GM12878 (cell line): ENCODE measurements at regions of chr9 and their contacts with region 1.

Region 1: GRCh38 chr9:89597711-89598625 is 6.8 kb upstream of the GADD45G start:
- DNase-seq: no peak
- ATAC-seq: peak; percentile 72
- H3K4me3 ChIP-seq: no peak overlapping the region
- H3K27ac ChIP-seq: no peak overlapping the region
- H3K4me1 ChIP-seq: no peaks in the 10 kb centered on the region
- H3K27me3 ChIP-seq: peaks cover 5 to 6% of the 10 kb centered on the region in 2 experiments
- CTCF ChIP-seq: peak; percentile 73 to 91 (median 90)
- EP300 ChIP-seq: no peak
- POLR2A ChIP-seq: no peak
- RAD21 ChIP-seq: peak; percentile 96

Region 2: GRCh38 chr9:89477811-89478630 is 119.9 kb before region 1 on chr9:
- CTCF ChIA-PET with region 1: no interaction called
- POLR2A ChIA-PET with region 1: no interaction called
- RAD21 ChIA-PET with region 1: no interaction called
- SMC1A ChIA-PET with region 1: no interaction called
- in situ Hi-C with region 1: no loop called
- intact Hi-C with region 1: no loop called
- DNase-seq: no peak
- ATAC-seq: peak; percentile 38
- H3K4me3 ChIP-seq: no peak overlapping the region
- H3K27ac ChIP-seq: peak overlapping the region; percentile 59
- H3K4me1 ChIP-seq: peaks cover 31% of the 10 kb centered on the region
- H3K27me3 ChIP-seq: no peaks in the 10 kb centered on the region
- CTCF ChIP-seq: no peak
- EP300 ChIP-seq: no peak
- POLR2A ChIP-seq: no peak
- RAD21 ChIP-seq: no peak

Region 3: DNA sequence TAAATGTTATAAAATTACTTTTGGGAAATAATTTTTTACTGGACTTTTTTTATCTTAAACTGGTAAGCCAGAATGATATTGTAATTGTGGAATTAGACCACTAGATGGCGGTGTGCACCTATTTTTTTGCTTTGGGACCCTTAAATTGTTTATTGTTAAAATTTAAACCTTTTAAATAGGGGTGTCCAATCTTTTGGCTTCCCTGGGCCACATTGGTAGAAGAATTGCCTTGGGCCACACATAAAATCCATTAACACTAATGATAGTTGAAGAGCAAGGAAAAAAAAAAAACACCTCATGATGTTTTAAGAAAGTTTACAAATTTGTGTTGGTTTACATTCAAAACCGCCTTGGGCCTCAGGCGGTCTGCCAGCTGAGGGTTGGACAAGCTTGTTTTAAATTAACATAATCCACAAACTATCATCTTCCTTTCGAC is 21.5 kb before region 1 on chr9:
- CTCF ChIA-PET with region 1: interaction called, 21 read pairs
- POLR2A ChIA-PET with region 1: no interaction called
- RAD21 ChIA-PET with region 1: interaction called, 9 read pairs
- SMC1A ChIA-PET with region 1: interaction called, 24 read pairs
- in situ Hi-C with region 1: no loop called
- intact Hi-C with region 1: no loop called
- DNase-seq: no peak
- ATAC-seq: no peak
- H3K4me3 ChIP-seq: no peak overlapping the region
- H3K27ac ChIP-seq: no peak overlapping the region
- H3K4me1 ChIP-seq: no peaks in the 10 kb centered on the region
- H3K27me3 ChIP-seq: no peaks in the 10 kb centered on the region; a peak in 2 of 4 replicates
- CTCF ChIP-seq: peak; percentile 34 to 58 (median 49); a peak in 5 of 6 replicates
- EP300 ChIP-seq: no peak
- POLR2A ChIP-seq: no peak
- RAD21 ChIP-seq: peak; percentile 63

Region 4: GRCh38 chr9:90095682-90096081 is 497.7 kb after region 1 on chr9:
- CTCF ChIA-PET with region 1: interaction called, 282 read pairs
- POLR2A ChIA-PET with region 1: interaction called, 4 read pairs
- RAD21 ChIA-PET with region 1: interaction called, 125 read pairs
- SMC1A ChIA-PET with region 1: interaction called, 89 read pairs
- in situ Hi-C with region 1: loop called (anchors 5 kb)
- intact Hi-C with region 1: no loop called
- DNase-seq: no peak
- ATAC-seq: no peak
- H3K4me3 ChIP-seq: no peak overlapping the region
- H3K27ac ChIP-seq: no peak overlapping the region
- H3K4me1 ChIP-seq: peaks cover 3% of the 10 kb centered on the region; the same call in 1 of the 2 replicates
- H3K27me3 ChIP-seq: no peaks in the 10 kb centered on the region
- CTCF ChIP-seq: no peak
- EP300 ChIP-seq: no peak
- POLR2A ChIP-seq: no peak
- RAD21 ChIP-seq: no peak

Region 5: DNA sequence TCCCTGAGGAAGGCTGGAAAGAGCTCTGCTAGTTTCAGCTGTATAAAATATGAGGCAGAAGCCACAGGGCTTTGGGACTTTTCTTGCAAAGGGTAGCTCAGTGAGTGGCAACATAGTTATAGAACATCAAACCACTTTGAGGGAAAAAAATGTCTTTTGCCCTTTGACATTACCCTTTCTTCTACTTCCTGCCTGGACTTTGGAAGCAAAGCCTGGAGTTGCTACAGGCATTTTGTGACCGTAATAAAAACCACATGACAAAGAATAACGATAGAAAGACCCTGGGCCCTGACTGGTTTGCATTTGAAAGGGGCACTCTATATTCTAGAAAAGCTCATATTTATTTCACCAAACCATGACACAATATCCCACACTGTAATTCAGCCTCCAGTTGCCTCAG is 603.8 kb after region 1 on chr9:
- CTCF ChIA-PET with region 1: no interaction called
- POLR2A ChIA-PET with region 1: no interaction called
- RAD21 ChIA-PET with region 1: no interaction called
- SMC1A ChIA-PET with region 1: no interaction called
- in situ Hi-C with region 1: loop called (anchors 10 kb)
- intact Hi-C with region 1: no loop called
- DNase-seq: no peak
- ATAC-seq: no peak
- H3K4me3 ChIP-seq: no peak overlapping the region
- H3K27ac ChIP-seq: no peak overlapping the region
- H3K4me1 ChIP-seq: no peaks in the 10 kb centered on the region
- H3K27me3 ChIP-seq: no peaks in the 10 kb centered on the region
- CTCF ChIP-seq: no peak
- EP300 ChIP-seq: no peak
- POLR2A ChIP-seq: no peak
- RAD21 ChIP-seq: no peak

Region 6: GRCh38 chr9:90773617-90774016 is 1175.6 kb after region 1 on chr9:
- CTCF ChIA-PET with region 1: no interaction called
- POLR2A ChIA-PET with region 1: no interaction called
- RAD21 ChIA-PET with region 1: no interaction called
- SMC1A ChIA-PET with region 1: no interaction called
- in situ Hi-C with region 1: loop called (anchors 25 kb)
- intact Hi-C with region 1: loop called (anchors 10 kb)
- DNase-seq: no peak
- ATAC-seq: peak; percentile 43
- H3K4me3 ChIP-seq: no peak overlapping the region
- H3K27ac ChIP-seq: no peak overlapping the region
- H3K4me1 ChIP-seq: peaks cover 39% of the 10 kb centered on the region
- H3K27me3 ChIP-seq: no peaks in the 10 kb centered on the region
- CTCF ChIP-seq: peak; percentile 39 to 44 (median 42); a peak in 5 of 6 replicates
- EP300 ChIP-seq: no peak
- POLR2A ChIP-seq: no peak
- RAD21 ChIP-seq: peak; percentile 59